GM12878 (cell line): ENCODE measurements at regions of chr1 and their contacts with region 1.

Region 1: DNA sequence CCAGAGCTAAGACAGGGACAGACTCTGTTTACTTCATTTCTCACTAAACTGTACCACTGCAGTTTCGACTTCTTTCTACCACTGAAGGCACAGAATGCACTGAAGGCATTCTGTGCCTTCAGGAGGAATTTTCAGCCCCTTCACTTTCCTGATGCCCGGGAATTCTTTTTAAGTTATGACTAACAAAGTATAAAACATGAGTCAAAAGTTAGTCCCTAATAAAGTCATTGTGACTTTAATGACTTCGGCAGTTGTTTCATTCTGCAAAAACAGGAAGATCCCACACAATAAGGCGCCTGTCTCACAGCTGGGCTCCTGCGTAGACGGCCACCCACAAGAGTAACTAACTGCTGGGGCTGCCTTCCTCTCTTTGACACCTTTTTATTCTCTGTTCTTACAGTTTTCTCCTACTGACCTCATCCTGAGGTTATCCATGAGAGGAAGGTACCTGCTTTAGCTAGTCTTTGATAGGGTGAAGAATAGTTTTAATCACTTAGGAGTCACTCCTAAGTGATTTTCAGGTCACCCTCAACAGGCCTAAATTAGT is 183.9 kb upstream of the SGIP1 start:
- DNase-seq: no peak
- ATAC-seq: peak; percentile 64
- H3K4me3 ChIP-seq: peak overlapping the region; percentile 52; the same call in 1 of the 2 replicates
- H3K27ac ChIP-seq: peak overlapping the region; percentile 88
- H3K4me1 ChIP-seq: peaks cover 56% of the 10 kb centered on the region
- H3K27me3 ChIP-seq: no peaks in the 10 kb centered on the region
- CTCF ChIP-seq: no peak
- EP300 ChIP-seq: peak; percentile 98 to 99
- POLR2A ChIP-seq: 0 out of 2 replicates have a peak, but pooled peaks have one; percentile 31
- RAD21 ChIP-seq: no peak

Region 2: GRCh38 chr1:66119148-66119547 is 230.9 kb before region 1 on chr1:
- CTCF ChIA-PET with region 1: no interaction called
- POLR2A ChIA-PET with region 1: no interaction called
- RAD21 ChIA-PET with region 1: no interaction called
- SMC1A ChIA-PET with region 1: no interaction called
- in situ Hi-C with region 1: no loop called
- intact Hi-C with region 1: no loop called
- DNase-seq: no peak
- ATAC-seq: no peak
- H3K4me3 ChIP-seq: no peak overlapping the region
- H3K27ac ChIP-seq: no peak overlapping the region
- H3K4me1 ChIP-seq: no peaks in the 10 kb centered on the region
- H3K27me3 ChIP-seq: no peaks in the 10 kb centered on the region
- CTCF ChIP-seq: no peak
- EP300 ChIP-seq: no peak
- POLR2A ChIP-seq: no peak
- RAD21 ChIP-seq: no peak

Region 3: GRCh38 chr1:66271216-66271903 is 78.7 kb before region 1 on chr1:
- CTCF ChIA-PET with region 1: interaction called, 4 read pairs
- POLR2A ChIA-PET with region 1: interaction called, 9 read pairs
- RAD21 ChIA-PET with region 1: interaction called, 23 read pairs
- SMC1A ChIA-PET with region 1: interaction called, 19 read pairs
- in situ Hi-C with region 1: no loop called
- intact Hi-C with region 1: no loop called
- DNase-seq: no peak
- ATAC-seq: peak; percentile 58
- H3K4me3 ChIP-seq: no peak overlapping the region
- H3K27ac ChIP-seq: no peak overlapping the region
- H3K4me1 ChIP-seq: peaks cover 21% of the 10 kb centered on the region
- H3K27me3 ChIP-seq: no peaks in the 10 kb centered on the region
- CTCF ChIP-seq: no peak
- EP300 ChIP-seq: peak; percentile 38 to 77; a peak in 1 of 4 replicates
- POLR2A ChIP-seq: no peak
- RAD21 ChIP-seq: no peak

Region 4: DNA sequence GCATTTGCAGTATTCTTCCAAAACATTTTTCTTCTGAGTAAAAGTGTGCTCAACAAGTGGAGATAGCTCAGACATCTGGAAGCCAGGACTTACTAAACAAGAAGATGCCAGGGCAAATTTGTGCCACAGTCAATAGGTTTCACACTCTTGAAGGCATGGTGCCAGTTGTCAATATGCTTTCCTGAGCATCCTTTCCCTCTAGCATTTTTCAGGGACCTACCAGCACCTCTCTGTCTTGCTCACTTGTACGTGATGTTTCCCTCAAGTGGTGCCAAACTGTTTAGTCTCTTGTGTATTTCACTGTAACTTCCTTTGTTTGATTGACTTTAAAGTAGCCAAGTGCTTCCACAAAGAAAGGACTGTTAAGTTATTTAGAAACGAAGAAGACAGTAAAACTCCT is 10.1 kb before region 1 on chr1:
- CTCF ChIA-PET with region 1: interaction called, 123 read pairs
- POLR2A ChIA-PET with region 1: interaction called, 79 read pairs
- RAD21 ChIA-PET with region 1: interaction called, 238 read pairs
- SMC1A ChIA-PET with region 1: interaction called, 463 read pairs
- in situ Hi-C with region 1: no loop called
- intact Hi-C with region 1: no loop called
- DNase-seq: no peak
- ATAC-seq: peak; percentile 8
- H3K4me3 ChIP-seq: peak overlapping the region; percentile 42
- H3K27ac ChIP-seq: peak overlapping the region; percentile 83
- H3K4me1 ChIP-seq: peaks cover 21% of the 10 kb centered on the region
- H3K27me3 ChIP-seq: no peaks in the 10 kb centered on the region
- CTCF ChIP-seq: no peak
- EP300 ChIP-seq: no peak
- POLR2A ChIP-seq: no peak
- RAD21 ChIP-seq: no peak

Region 5: GRCh38 chr1:66380452-66381212 is 30.6 kb after region 1 on chr1:
- CTCF ChIA-PET with region 1: interaction called, 29 read pairs
- POLR2A ChIA-PET with region 1: interaction called, 3 read pairs
- RAD21 ChIA-PET with region 1: interaction called, 113 read pairs
- SMC1A ChIA-PET with region 1: interaction called, 463 read pairs
- in situ Hi-C with region 1: no loop called
- intact Hi-C with region 1: no loop called
- DNase-seq: peak; percentile 87
- ATAC-seq: peak; percentile 95
- H3K4me3 ChIP-seq: peak overlapping the region; percentile 55
- H3K27ac ChIP-seq: peak overlapping the region; percentile 83
- H3K4me1 ChIP-seq: peaks cover 39% of the 10 kb centered on the region
- H3K27me3 ChIP-seq: no peaks in the 10 kb centered on the region
- CTCF ChIP-seq: no peak
- EP300 ChIP-seq: peak; percentile 99
- POLR2A ChIP-seq: no peak
- RAD21 ChIP-seq: no peak

Region 6: DNA sequence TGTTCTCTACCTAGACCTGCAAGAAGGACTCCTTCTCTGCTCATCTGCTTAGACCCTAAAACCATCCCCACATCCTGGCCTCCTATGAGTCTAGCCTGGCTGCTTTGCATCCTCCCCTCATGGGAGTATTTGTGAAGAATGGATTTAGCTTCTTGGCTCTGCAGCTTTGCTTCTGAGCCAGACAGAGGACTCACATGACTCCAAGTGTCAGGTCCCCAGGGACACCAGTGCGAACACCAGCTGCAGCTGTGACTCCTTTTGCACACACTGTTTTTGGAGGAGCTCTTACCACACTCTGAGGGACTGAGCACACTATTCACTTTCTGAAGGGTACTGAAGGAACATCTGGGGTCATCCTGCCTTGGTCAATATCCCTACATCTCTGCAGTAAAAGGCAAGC is 52.1 kb after region 1 on chr1:
- CTCF ChIA-PET with region 1: interaction called, 5 read pairs
- POLR2A ChIA-PET with region 1: interaction called, 6 read pairs
- RAD21 ChIA-PET with region 1: interaction called, 14 read pairs
- SMC1A ChIA-PET with region 1: interaction called, 22 read pairs
- in situ Hi-C with region 1: no loop called
- intact Hi-C with region 1: loop called (anchors 2 kb)
- DNase-seq: peak; percentile 87
- ATAC-seq: peak; percentile 76
- H3K4me3 ChIP-seq: no peak overlapping the region
- H3K27ac ChIP-seq: peak overlapping the region; percentile 77
- H3K4me1 ChIP-seq: peaks cover 58% of the 10 kb centered on the region
- H3K27me3 ChIP-seq: no peaks in the 10 kb centered on the region
- CTCF ChIP-seq: no peak
- EP300 ChIP-seq: peak; percentile 88 to 95; a peak in 3 of 4 replicates
- POLR2A ChIP-seq: 0 out of 2 replicates have a peak, but pooled peaks have one; percentile 42
- RAD21 ChIP-seq: no peak

Region 7: GRCh38 chr1:66464802-66465201 is 114.7 kb after region 1 on chr1:
- CTCF ChIA-PET with region 1: no interaction called
- POLR2A ChIA-PET with region 1: no interaction called
- RAD21 ChIA-PET with region 1: no interaction called
- SMC1A ChIA-PET with region 1: no interaction called
- in situ Hi-C with region 1: no loop called
- intact Hi-C with region 1: no loop called
- DNase-seq: no peak
- ATAC-seq: no peak
- H3K4me3 ChIP-seq: no peak overlapping the region
- H3K27ac ChIP-seq: no peak overlapping the region
- H3K4me1 ChIP-seq: no peaks in the 10 kb centered on the region
- H3K27me3 ChIP-seq: peaks cover 0 to 3% of the 10 kb centered on the region in 2 experiments; a peak in 1 of 4 replicates
- CTCF ChIP-seq: no peak
- EP300 ChIP-seq: no peak
- POLR2A ChIP-seq: no peak
- RAD21 ChIP-seq: no peak

Region 8: DNA sequence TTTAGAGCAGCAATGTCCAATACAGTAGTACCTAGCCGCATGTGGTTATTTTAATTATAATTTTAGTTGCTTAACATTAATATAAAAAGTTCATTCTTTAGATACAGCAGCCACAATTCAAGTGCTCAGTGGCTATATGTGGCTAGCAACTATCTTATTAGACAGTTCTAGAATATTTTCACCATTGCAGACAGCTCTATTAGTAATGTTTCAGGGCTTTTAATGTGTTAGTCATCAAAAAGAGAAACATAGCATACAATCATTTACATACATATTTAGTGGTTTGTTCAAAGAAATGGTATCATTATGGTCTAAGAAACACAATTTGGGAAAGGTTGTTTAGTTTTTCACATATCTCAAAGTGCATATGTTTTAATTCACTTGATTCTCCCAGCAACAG is 335.6 kb after region 1 on chr1:
- CTCF ChIA-PET with region 1: no interaction called
- POLR2A ChIA-PET with region 1: no interaction called
- RAD21 ChIA-PET with region 1: no interaction called
- SMC1A ChIA-PET with region 1: no interaction called
- in situ Hi-C with region 1: no loop called
- intact Hi-C with region 1: no loop called
- DNase-seq: no peak
- ATAC-seq: no peak
- H3K4me3 ChIP-seq: no peak overlapping the region
- H3K27ac ChIP-seq: no peak overlapping the region
- H3K4me1 ChIP-seq: no peaks in the 10 kb centered on the region
- H3K27me3 ChIP-seq: no peaks in the 10 kb centered on the region
- CTCF ChIP-seq: no peak
- EP300 ChIP-seq: no peak
- POLR2A ChIP-seq: no peak
- RAD21 ChIP-seq: no peak

Region 9: DNA sequence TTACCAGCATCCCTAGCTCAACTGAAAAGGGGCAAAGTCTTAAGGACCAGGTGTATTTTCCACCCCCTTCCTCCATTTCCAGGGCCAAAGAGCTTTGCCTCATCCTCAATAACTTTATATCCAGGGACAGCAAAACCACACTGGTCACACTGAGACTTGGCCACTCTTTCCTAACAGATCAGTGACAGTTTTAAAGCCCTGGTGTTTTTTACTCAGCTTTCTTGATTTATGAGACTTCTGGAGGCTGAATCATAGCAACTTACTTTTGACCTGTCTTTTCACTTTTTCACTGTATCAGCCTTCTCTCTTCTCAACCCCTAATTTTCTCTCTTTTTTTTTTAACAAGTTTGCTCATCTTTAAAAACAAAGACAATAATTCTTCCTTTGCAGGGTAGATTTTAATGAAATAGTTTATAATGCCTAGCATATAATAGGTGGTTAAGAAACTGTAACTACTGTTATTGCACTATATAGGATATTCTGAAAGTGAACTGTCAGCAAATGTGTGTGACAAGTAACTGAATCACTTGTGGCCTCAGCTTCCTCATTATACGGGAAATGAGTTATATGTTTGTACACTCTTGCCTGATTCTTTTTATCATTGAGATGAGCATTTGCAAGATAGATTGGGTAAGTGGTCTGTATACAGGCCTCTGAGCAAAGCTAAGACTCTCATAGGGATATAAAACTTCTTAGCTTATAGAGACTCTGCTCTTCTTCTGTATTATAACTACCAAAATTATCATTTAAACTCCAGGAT is 382.5 kb after region 1 on chr1:
- CTCF ChIA-PET with region 1: no interaction called
- POLR2A ChIA-PET with region 1: no interaction called
- RAD21 ChIA-PET with region 1: no interaction called
- SMC1A ChIA-PET with region 1: no interaction called
- in situ Hi-C with region 1: no loop called
- intact Hi-C with region 1: loop called (anchors 10 kb)
- DNase-seq: no peak
- ATAC-seq: no peak
- H3K4me3 ChIP-seq: no peak overlapping the region
- H3K27ac ChIP-seq: no peak overlapping the region
- H3K4me1 ChIP-seq: no peaks in the 10 kb centered on the region
- H3K27me3 ChIP-seq: no peaks in the 10 kb centered on the region
- CTCF ChIP-seq: no peak
- EP300 ChIP-seq: no peak
- POLR2A ChIP-seq: no peak
- RAD21 ChIP-seq: no peak